ENCODE measurements at regions of chr3 and their contacts with region 1.

Region 1: GRCh38 chr3:141311496-141312353 is 56.6 kb upstream of the ZBTB38 start:
- DNase-seq: peak; percentile 97
- ATAC-seq: peak; percentile 98
- H3K4me3 ChIP-seq: peak overlapping the region; percentile 71 to 96 (median 93)
- H3K4me3 Mint-ChIP-seq: peak overlapping the region; percentile 98
- H3K27ac ChIP-seq: peak overlapping the region; percentile 65 to 78
- H3K27ac Mint-ChIP-seq: peak overlapping the region; percentile 97
- H3K4me1 ChIP-seq: peaks cover 15 to 17% of the 10 kb centered on the region in 2 donors
- H3K4me1 Mint-ChIP-seq: peaks cover 23% of the 10 kb centered on the region
- H3K27me3 ChIP-seq: no peaks in the 10 kb centered on the region
- H3K27me3 Mint-ChIP-seq: no peaks in the 10 kb centered on the region
- CTCF ChIP-seq: peak; percentile 72

Region 2: DNA sequence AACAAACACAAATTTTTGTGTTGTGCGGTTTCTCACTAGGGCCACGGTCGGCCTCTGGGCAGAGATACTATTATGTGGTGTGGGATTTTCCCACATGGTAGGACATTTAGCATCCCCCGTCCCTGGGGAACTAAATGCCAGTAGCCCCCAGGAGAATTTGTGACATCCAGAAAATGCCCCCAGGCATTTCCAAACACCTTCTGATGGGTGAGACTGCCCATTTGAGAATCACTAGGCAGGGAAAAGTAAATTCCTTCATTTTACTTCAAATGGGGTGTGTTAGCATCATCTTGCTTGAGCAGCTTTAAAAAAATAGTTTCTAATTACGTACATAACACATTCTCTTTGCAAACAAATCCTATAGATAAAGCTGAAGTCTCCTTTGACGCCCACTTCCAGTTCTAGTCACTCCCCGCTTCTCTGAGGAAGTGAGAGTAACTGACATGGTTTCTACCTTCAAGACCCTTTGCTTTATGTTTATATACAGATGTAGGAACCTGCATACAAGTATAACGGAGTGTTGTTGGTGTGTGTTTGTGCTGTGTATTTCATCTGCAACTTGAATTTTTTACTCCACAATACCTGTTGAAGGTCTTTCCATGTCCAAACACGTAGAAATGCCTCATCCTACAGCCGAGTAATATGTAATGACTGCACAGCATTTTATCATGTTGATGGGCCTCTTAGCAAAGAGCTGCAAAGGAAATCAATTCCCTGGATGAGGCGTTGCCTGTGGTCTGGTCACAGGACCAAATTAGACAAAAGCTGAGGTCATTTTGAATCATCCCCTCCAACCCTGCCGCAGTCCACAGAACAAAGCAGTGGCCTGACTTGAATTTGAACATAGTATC is 25.2 kb after region 1 on chr3:
- CTCF ChIA-PET with region 1: interaction called, 11 read pairs
- POLR2A ChIA-PET with region 1: no interaction called
- intact Hi-C with region 1: loop called (anchors 2 kb)
- DNase-seq: peak; percentile 68
- ATAC-seq: peak; percentile 87
- H3K4me3 ChIP-seq: peak overlapping the region in 1 of 5 experiments; percentile 10
- H3K4me3 Mint-ChIP-seq: peak overlapping the region; percentile 65
- H3K27ac ChIP-seq: no peak overlapping the region
- H3K27ac Mint-ChIP-seq: peak overlapping the region; percentile 73
- H3K4me1 ChIP-seq: peaks cover 12 to 13% of the 10 kb centered on the region in 2 donors
- H3K4me1 Mint-ChIP-seq: peaks cover 15% of the 10 kb centered on the region
- H3K27me3 ChIP-seq: no peaks in the 10 kb centered on the region
- H3K27me3 Mint-ChIP-seq: peaks cover 4% of the 10 kb centered on the region
- CTCF ChIP-seq: no peak

Region 3: GRCh38 chr3:141386611-141387111 is 74.9 kb after region 1 on chr3:
- CTCF ChIA-PET with region 1: interaction called, 12 read pairs
- POLR2A ChIA-PET with region 1: interaction called, 4 read pairs
- intact Hi-C with region 1: no loop called
- DNase-seq: peak; percentile 38
- ATAC-seq: peak; percentile 56
- H3K4me3 ChIP-seq: peak overlapping the region in 4 of 5 experiments; percentile 30 to 55 (median 32)
- H3K4me3 Mint-ChIP-seq: peak overlapping the region; percentile 87
- H3K27ac ChIP-seq: peak overlapping the region in 1 of 2 donors; percentile 43
- H3K27ac Mint-ChIP-seq: peak overlapping the region; percentile 91
- H3K4me1 ChIP-seq: no peaks in the 10 kb centered on the region
- H3K4me1 Mint-ChIP-seq: peaks cover 42% of the 10 kb centered on the region
- H3K27me3 ChIP-seq: peaks cover 0 to 3% (median 0%) of the 10 kb centered on the region in 4 experiments
- H3K27me3 Mint-ChIP-seq: no peaks in the 10 kb centered on the region
- CTCF ChIP-seq: no peak

Region 4: DNA sequence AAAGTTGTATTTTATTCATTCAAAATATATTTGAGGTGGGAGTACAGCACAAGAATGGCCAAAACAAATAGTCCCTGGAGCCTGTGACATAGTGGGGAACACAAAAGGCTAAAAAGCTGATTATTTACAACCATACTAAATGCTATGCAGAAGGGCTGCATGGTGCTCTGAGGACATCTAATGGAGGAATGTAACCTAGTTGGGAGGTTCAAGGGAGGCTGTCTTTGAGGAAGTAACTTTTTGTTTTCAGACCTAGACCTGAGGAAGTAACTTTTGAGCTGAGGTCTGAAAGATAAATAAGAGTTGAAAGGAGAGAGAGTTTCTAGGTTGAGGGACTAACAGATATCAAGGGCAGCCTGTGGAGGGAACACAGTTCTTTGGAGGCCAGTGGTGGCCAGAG is 140.3 kb after region 1 on chr3:
- CTCF ChIA-PET with region 1: interaction called, 404 read pairs
- POLR2A ChIA-PET with region 1: interaction called, 7 read pairs
- intact Hi-C with region 1: loop called (anchors 1 kb)
- DNase-seq: peak; percentile 79
- ATAC-seq: peak; percentile 85
- H3K4me3 ChIP-seq: no peak overlapping the region
- H3K4me3 Mint-ChIP-seq: no peak overlapping the region
- H3K27ac ChIP-seq: peak overlapping the region; percentile 55 to 77
- H3K27ac Mint-ChIP-seq: no peak overlapping the region
- H3K4me1 ChIP-seq: peaks cover 12 to 16% of the 10 kb centered on the region in 2 donors
- H3K4me1 Mint-ChIP-seq: peaks cover 7% of the 10 kb centered on the region
- H3K27me3 ChIP-seq: no peaks in the 10 kb centered on the region
- H3K27me3 Mint-ChIP-seq: no peaks in the 10 kb centered on the region
- CTCF ChIP-seq: peak; percentile 73

Region 5: DNA sequence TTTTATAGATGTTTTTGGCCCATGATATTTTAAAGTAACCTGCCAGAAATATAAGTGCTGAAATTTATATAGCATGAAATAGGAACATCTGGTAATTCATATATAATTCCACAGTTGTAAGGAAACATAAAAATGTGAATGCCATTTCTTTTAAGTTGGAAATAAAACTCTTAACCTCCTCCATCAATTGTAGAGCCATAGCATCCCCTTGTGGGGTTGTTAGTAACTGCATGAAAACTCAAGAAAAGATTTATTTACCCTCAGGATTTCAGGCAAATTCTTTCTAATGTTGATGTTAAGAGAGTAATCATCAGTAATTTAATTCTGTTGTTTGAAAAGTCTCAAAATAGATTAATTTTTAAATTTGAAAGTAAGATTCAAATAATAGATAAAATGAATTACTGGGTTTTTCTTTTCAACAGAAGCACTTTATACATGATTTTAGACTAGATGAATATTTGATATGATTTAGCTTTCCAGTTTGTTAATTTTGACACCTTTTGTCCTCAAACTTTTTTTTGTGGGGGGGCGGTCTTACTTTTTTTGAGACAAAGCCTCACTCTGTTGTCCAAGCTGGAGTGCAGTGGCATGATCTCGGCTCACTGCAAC is 249.8 kb after region 1 on chr3:
- CTCF ChIA-PET with region 1: interaction called, 28 read pairs
- POLR2A ChIA-PET with region 1: no interaction called
- intact Hi-C with region 1: no loop called
- DNase-seq: peak; percentile 75
- ATAC-seq: peak; percentile 54
- H3K4me3 ChIP-seq: no peak overlapping the region
- H3K4me3 Mint-ChIP-seq: no peak overlapping the region
- H3K27ac ChIP-seq: peak overlapping the region in 1 of 2 donors; percentile 41
- H3K27ac Mint-ChIP-seq: no peak overlapping the region
- H3K4me1 ChIP-seq: peaks cover 11 to 13% of the 10 kb centered on the region in 2 donors
- H3K4me1 Mint-ChIP-seq: peaks cover 6% of the 10 kb centered on the region
- H3K27me3 ChIP-seq: no peaks in the 10 kb centered on the region
- H3K27me3 Mint-ChIP-seq: no peaks in the 10 kb centered on the region
- CTCF ChIP-seq: peak; percentile 100

Region 6: GRCh38 chr3:142148792-142149672 is 837.3 kb after region 1 on chr3 and contains the start of gene TFDP2:
- CTCF ChIA-PET with region 1: no interaction called
- POLR2A ChIA-PET with region 1: no interaction called
- intact Hi-C with region 1: loop called (anchors 5 kb)
- DNase-seq: peak; percentile 88
- ATAC-seq: peak; percentile 98
- H3K4me3 ChIP-seq: peak within 1 kb of the TSS; percentile 56 to 85 (median 74)
- H3K4me3 Mint-ChIP-seq: peak within 1 kb of the TSS; percentile 88
- H3K27ac ChIP-seq: peak within 1 kb of the TSS in 1 of 2 donors; percentile 76
- H3K27ac Mint-ChIP-seq: peak within 1 kb of the TSS; percentile 87
- H3K4me1 ChIP-seq: peaks cover 7 to 15% of the 10 kb centered on the region in 2 donors
- H3K4me1 Mint-ChIP-seq: peaks cover 19% of the 10 kb centered on the region
- H3K27me3 ChIP-seq: no peaks in the 10 kb centered on the region
- H3K27me3 Mint-ChIP-seq: no peaks in the 10 kb centered on the region
- CTCF ChIP-seq: no peak
- total RNA-seq, gene TFDP2: 31.7 and 32.9 TPM in 2 replicates